ENCODE measurements at regions of chr16 and their contacts with region 1.

Region 1: GRCh38 chr16:13503960-13504635 is 415.9 kb upstream of the ERCC4 start:
- DNase-seq: no peak
- H3K4me3 Mint-ChIP-seq: no peak overlapping the region
- H3K27ac Mint-ChIP-seq: no peak overlapping the region
- H3K4me1 Mint-ChIP-seq: no peaks in the 10 kb centered on the region
- H3K27me3 Mint-ChIP-seq: no peaks in the 10 kb centered on the region
- CTCF ChIP-seq: no peak

Region 2: GRCh38 chr16:13545271-13545670 is 41.2 kb after region 1 on chr16:
- CTCF ChIA-PET with region 1: no interaction called
- intact Hi-C with region 1: loop called (anchors 5 kb)
- DNase-seq: no peak
- H3K4me3 Mint-ChIP-seq: no peak overlapping the region
- H3K27ac Mint-ChIP-seq: no peak overlapping the region
- H3K4me1 Mint-ChIP-seq: no peaks in the 10 kb centered on the region
- H3K27me3 Mint-ChIP-seq: no peaks in the 10 kb centered on the region
- CTCF ChIP-seq: no peak